ENCODE measurements at regions of chr2 and their contacts with region 1.

Region 1: DNA sequence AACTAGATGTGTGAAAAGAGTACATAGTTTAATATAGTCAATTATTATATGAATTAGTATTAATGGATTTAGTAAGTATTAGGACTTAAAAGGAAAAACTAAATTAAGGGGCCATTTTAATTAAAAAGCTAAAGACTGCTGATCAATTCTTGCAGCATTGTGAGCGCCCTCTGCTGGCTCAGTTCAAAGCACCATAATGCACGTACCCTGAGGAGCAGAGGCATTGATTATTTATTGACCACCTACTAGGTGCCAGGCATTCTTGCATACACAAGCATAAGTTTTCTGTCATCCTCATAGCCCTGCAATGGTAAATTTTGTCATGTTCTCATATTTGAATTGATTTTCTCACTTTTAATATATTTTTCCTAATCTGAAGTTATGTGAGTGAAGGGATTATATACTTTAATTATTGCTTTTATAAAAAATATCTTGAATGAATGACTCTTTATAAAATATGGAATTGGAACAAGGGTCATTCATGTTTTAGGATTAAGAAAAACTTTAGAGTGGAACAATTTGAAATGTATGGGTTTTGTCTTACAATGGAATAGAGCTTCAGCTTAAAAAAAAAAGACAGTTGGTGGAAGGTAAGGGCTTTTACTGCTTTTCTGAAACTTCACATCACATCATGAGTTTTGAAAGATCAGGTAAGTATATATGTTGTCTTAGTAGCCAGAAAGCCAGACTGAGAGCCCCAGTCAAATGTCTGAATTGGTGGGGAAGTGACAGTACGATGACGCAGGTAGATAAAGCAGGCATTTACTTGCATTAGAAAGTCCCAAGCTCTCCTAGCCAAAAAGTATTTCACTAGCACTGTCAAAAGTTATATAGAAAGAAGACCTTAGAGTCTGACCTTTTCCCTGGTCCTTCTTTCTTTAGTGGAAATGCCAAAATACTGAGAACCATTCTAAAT is 9.7 kb downstream of the ITGA4 start:
- DNase-seq: peak; percentile 82 to 88 (median 87)
- H3K4me3 ChIP-seq: peak overlapping the region in 3 of 7 experiments; percentile 7 to 20 (median 10)
- H3K27ac ChIP-seq: peak overlapping the region in 1 of 2 experiments; percentile 71
- H3K4me1 ChIP-seq: peaks cover 37 to 87% (median 66%) of the 10 kb centered on the region in 4 experiments
- H3K27me3 ChIP-seq: no peaks in the 10 kb centered on the region

Region 2: DNA sequence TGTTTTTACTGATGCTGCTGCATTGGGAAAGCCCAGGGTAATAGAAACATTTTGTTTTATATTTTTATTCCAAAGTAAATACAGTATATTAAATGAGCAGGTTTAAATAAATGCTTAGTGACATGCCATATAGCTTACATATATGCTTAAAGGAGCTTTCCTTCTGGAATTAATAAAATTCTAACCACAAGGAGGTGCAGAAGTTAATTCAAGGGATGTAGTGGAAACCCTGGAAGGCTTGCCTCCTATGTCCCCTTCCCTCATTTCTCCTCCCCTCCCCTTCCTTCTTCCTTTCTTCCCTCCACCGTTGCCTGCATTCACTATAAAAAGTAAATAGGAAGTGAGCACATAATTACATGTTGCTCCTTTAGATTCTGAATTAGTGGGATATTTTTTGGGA is 390.3 kb before region 1 on chr2:
- CTCF ChIA-PET with region 1: interaction called, 13 read pairs
- POLR2A ChIA-PET with region 1: no interaction called
- DNase-seq: no peak
- H3K4me3 ChIP-seq: no peak overlapping the region
- H3K27ac ChIP-seq: no peak overlapping the region
- H3K4me1 ChIP-seq: peaks cover 0 to 8% (median 2%) of the 10 kb centered on the region in 4 experiments
- H3K27me3 ChIP-seq: no peaks in the 10 kb centered on the region

Region 3: GRCh38 chr2:181104512-181105115 is 362.3 kb before region 1 on chr2:
- CTCF ChIA-PET with region 1: interaction called, 78 read pairs
- POLR2A ChIA-PET with region 1: interaction called, 3 read pairs
- DNase-seq: peak; percentile 60 to 71 (median 62)
- H3K4me3 ChIP-seq: peak overlapping the region in 2 of 7 experiments; percentile 8 to 53
- H3K27ac ChIP-seq: no peak overlapping the region
- H3K4me1 ChIP-seq: peaks cover 3 to 25% (median 9%) of the 10 kb centered on the region in 4 experiments
- H3K27me3 ChIP-seq: no peaks in the 10 kb centered on the region

Region 4: GRCh38 chr2:181312515-181312927 is 154.4 kb before region 1 on chr2:
- CTCF ChIA-PET with region 1: interaction called, 17 read pairs
- POLR2A ChIA-PET with region 1: no interaction called
- DNase-seq: peak in 2 of 3 donors; percentile 23 to 41
- H3K4me3 ChIP-seq: no peak overlapping the region
- H3K27ac ChIP-seq: peak overlapping the region in 1 of 2 experiments; percentile 43
- H3K4me1 ChIP-seq: peaks cover 25 to 60% (median 51%) of the 10 kb centered on the region in 4 experiments
- H3K27me3 ChIP-seq: no peaks in the 10 kb centered on the region